OCI-LY7 (cell line): ENCODE measurements at regions of chr6 and their contacts with region 1.

Region 1: DNA sequence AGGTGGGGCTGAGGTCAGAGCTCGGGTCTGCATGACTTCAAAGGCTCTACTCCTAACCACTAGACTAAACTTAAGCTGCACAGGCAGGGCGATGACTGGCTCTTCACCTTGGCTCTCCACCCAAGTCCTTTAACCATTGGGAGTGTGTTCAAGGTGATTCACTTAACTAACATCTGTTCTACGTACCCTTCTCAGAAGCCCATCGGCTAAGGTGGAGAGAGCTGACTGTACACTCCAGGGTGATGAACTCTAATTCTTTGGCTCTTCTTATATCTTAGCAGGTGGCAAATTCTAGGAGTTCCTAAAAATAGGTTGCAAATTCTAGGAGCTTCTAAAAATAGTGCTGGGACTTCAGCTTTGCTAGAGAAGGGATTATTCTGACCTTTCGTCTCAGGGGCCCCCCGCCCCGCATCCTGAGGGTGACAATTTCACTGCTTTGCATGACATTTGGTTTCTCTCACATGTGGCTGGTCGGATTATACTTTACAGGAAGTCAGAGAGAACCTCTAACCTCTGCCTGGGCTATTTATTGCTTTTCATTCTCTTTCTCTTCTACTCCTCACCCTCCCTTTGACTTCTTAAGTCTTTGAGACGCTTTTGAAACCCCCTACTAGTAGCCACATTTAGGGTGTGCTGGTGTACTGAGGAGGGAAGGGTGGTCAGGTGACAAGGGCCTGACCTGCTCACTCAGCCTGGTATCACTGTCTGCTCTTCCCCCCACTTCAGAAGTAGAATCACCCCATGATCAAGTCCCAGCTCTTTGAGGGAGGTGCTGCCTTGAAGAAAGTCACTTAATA is 55.5 kb downstream of the PRDM1 start:
- DNase-seq: peak; percentile 73
- H3K4me3 ChIP-seq: peak overlapping the region; percentile 11
- H3K27ac ChIP-seq: peak overlapping the region; percentile 85
- H3K4me1 ChIP-seq: peaks cover 51% of the 10 kb centered on the region
- CTCF ChIP-seq: no peak

Region 2: DNA sequence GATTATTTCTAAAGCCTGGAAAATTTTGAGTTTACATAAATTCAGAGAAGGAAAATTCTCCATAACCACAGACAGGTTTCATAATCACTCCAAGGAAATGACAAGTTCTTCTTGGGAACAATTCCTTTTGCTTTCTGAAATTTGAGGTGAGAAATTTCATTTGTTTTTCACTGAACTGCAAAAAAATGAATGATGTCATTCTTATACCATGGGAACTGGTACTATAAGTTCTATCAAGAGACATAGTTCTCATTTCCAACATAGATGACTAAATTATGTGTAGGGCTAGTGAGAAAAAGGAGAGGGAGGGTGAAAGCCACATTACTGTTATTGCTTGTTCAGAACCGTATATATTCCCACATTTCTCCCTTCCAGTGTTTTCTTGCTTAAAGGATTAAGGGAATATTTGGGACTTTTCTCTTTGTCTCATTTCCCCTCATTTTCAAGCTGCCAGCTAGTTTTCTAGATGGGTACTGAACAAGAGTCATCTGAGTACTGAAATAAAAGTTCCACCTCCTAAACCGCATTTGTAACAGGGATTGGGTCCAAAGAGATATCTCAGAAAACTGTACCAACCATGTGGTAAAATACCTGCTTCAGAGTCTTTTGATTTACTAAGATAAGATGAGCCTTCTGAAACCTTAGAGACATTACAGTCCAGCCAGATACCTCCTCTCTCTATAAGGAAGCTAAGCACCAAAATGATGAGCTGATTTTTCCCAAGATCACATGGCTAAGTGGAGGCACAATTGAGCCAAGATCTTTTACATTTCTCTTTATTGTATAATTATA is 199.8 kb before region 1 on chr6:
- CTCF ChIA-PET with region 1: no interaction called
- POLR2A ChIA-PET with region 1: no interaction called
- intact Hi-C with region 1: no loop called
- DNase-seq: no peak
- H3K4me3 ChIP-seq: no peak overlapping the region
- H3K27ac ChIP-seq: no peak overlapping the region
- H3K4me1 ChIP-seq: no peaks in the 10 kb centered on the region
- CTCF ChIP-seq: no peak

Region 3: GRCh38 chr6:106097411-106098231 is 44.0 kb before region 1 on chr6:
- CTCF ChIA-PET with region 1: interaction called, 7 read pairs
- POLR2A ChIA-PET with region 1: interaction called, 15 read pairs
- intact Hi-C with region 1: no loop called
- DNase-seq: peak; percentile 77
- H3K4me3 ChIP-seq: peak overlapping the region; percentile 69
- H3K27ac ChIP-seq: peak overlapping the region; percentile 55
- H3K4me1 ChIP-seq: peaks cover 46% of the 10 kb centered on the region
- CTCF ChIP-seq: no peak

Region 4: GRCh38 chr6:106117579-106117978 is 24.1 kb before region 1 on chr6:
- CTCF ChIA-PET with region 1: no interaction called
- POLR2A ChIA-PET with region 1: interaction called, 15 read pairs
- intact Hi-C with region 1: no loop called
- DNase-seq: no peak
- H3K4me3 ChIP-seq: no peak overlapping the region
- H3K27ac ChIP-seq: no peak overlapping the region
- H3K4me1 ChIP-seq: no peaks in the 10 kb centered on the region
- CTCF ChIP-seq: no peak

Region 5: GRCh38 chr6:106163446-106163965 is 21.9 kb after region 1 on chr6:
- CTCF ChIA-PET with region 1: interaction called, 5 read pairs
- POLR2A ChIA-PET with region 1: interaction called, 98 read pairs
- intact Hi-C with region 1: loop called (anchors 1 kb)
- DNase-seq: peak; percentile 74
- H3K4me3 ChIP-seq: peak overlapping the region; percentile 34
- H3K27ac ChIP-seq: peak overlapping the region; percentile 73
- H3K4me1 ChIP-seq: peaks cover 58% of the 10 kb centered on the region
- CTCF ChIP-seq: no peak